Esophagus muscularis mucosa (tissue), 4 donors: ENCODE measurements at regions of chr4 and their contacts with region 1.

Region 1: GRCh38 chr4:147813109-147813773 is 81.4 kb downstream of the ARHGAP10 start:
- DNase-seq: no peak
- H3K4me3 ChIP-seq: peak overlapping the region in 2 of 4 donors; percentile 4 to 7
- H3K27ac ChIP-seq: peak overlapping the region; percentile 75 to 82 (median 76)
- H3K4me1 ChIP-seq: peaks cover 82 to 100% (median 96%) of the 10 kb centered on the region in 4 donors
- H3K27me3 ChIP-seq: no peaks in the 10 kb centered on the region
- CTCF ChIP-seq: no peak
- EP300 ChIP-seq: no peak
- POLR2A ChIP-seq: no peak

Region 2: GRCh38 chr4:147731580-147732517 is 81.4 kb before region 1 on chr4 and contains the start of gene ARHGAP10:
- intact Hi-C with region 1: loop called (anchors 10 kb)
- DNase-seq: peak; percentile 94
- H3K4me3 ChIP-seq: peak within 1 kb of the TSS; percentile 79 to 98 (median 90)
- H3K27ac ChIP-seq: peak within 1 kb of the TSS; percentile 93 to 98 (median 96)
- H3K4me1 ChIP-seq: peaks cover 3 to 32% (median 31%) of the 10 kb centered on the region in 4 donors
- H3K27me3 ChIP-seq: no peaks in the 10 kb centered on the region
- CTCF ChIP-seq: no peak
- EP300 ChIP-seq: no peak
- POLR2A ChIP-seq: peak; percentile 40
- total RNA-seq, gene ARHGAP10: 186 to 296 (median 192) TPM